Activated CD4-positive, alpha-beta T cell treated with anti-CD3 and anti-CD28 coated beads, Interleukin-2, amount 10 ng/mL, durations not matched to agents 24 days and 14 days (primary cell): ENCODE measurements at regions of chr11 and their contacts with region 1.

Region 1: DNA sequence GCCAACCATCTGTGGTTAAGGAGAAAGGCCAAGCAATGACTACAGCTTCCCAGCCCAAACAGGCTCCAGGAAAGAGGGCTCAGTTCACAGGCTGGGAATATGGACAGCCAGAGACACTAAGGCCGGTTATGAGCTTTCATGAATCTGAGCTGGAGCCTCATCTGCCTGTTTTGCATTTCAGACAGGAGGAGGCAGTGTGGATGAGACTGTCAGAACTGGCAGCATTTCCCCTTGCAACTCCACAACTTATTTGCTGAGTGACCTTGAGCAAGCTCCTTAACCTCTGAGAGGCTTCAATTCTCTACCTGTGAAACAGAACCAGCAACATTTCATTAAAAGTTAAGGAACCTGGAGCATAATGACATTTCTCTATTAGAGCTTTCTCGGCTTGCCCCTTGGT is 264.0 kb downstream of the ETS1 start:
- DNase-seq: peak; percentile 87
- H3K4me3 Mint-ChIP-seq: peak overlapping the region; percentile 69
- H3K27ac Mint-ChIP-seq: peak overlapping the region; percentile 97
- H3K4me1 Mint-ChIP-seq: peaks cover 79% of the 10 kb centered on the region
- H3K27me3 Mint-ChIP-seq: no peaks in the 10 kb centered on the region

Region 2: GRCh38 chr11:128232588-128232987 is 90.8 kb before region 1 on chr11:
- intact Hi-C with region 1: loop called (anchors 1 kb)
- DNase-seq: peak; percentile 68
- H3K4me3 Mint-ChIP-seq: peak overlapping the region; percentile 55
- H3K27ac Mint-ChIP-seq: peak overlapping the region; percentile 90
- H3K4me1 Mint-ChIP-seq: peaks cover 41% of the 10 kb centered on the region
- H3K27me3 Mint-ChIP-seq: no peaks in the 10 kb centered on the region

Region 3: DNA sequence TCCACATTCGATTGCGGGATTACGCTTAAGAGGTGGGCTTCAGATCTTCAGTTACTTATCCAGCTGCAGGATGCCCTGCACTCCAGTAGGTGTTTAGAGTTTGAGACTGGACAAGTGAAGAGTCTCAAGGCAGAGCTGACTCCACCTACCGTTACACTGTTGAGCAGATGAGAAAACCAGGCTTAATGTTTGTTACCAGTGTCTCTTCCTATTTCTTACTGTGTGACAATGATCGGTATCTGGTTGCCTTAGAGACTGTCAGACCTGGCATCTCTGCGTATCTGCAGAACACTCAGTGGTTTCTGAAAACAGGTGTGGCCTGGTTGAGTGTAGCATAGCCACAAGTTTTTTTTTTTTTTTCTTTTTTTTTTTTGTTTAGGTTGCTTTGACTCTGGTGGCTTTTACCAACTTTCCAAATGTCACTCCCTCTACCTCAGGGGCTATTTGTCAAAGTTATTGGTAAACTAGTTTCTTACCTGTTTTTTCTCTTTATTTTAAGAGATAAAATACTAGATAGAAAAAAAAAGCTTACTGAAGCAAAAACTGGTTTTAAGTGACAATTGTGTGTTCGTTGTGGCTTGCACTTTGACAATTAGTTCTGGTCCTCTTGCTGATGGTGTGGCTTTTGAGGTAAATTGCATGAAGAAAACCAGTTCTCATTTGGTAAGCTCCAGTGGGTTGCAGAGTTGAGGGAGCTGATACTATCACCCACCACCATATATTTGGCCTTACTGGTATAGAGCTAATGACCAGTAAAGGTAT is 20.8 kb before region 1 on chr11:
- intact Hi-C with region 1: loop called (anchors 1 kb)
- DNase-seq: peak; percentile 94
- H3K4me3 Mint-ChIP-seq: peak overlapping the region; percentile 81
- H3K27ac Mint-ChIP-seq: peak overlapping the region; percentile 93
- H3K4me1 Mint-ChIP-seq: peaks cover 70% of the 10 kb centered on the region
- H3K27me3 Mint-ChIP-seq: no peaks in the 10 kb centered on the region

Region 4: DNA sequence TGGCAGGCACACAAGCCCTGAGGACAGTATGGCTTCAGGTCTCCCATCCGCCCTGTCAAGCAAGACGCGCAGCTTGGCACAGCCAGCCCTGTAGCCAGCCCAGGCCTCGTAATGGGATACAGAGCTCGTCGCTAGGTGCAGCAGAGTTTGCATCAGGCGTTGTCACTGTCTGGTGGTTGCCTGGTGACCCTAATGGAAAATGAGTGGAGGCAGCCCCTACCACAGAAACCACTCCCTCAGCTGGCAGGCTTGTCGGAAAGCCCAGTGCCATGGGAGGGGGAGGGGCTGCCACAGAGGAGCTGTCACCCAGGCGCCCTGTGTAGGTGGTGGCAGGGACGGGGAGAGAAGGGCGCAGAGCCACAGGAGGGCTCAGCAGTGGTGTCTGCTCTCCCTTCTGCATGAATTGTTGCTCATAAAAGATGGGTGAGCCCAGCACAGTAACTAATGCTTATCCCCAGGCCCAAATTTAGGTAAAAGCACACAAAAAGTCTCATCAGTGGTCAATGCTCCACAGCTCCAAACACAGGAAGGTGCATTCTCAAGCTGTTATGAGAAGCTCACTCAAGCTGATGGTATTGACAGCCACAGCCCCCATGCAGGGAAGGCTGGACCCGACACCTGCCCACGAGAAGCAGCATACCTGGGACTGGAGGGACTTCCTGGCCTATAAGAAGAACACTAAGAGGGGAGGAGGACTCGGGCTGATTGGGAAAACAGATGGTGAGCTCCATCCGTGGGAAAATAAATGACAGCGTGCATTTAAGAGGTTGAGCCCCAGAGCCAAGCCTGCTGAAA is 99.4 kb after region 1 on chr11:
- intact Hi-C with region 1: loop called (anchors 1 kb)
- DNase-seq: peak; percentile 89
- H3K4me3 Mint-ChIP-seq: peak overlapping the region; percentile 65
- H3K27ac Mint-ChIP-seq: peak overlapping the region; percentile 96
- H3K4me1 Mint-ChIP-seq: peaks cover 24% of the 10 kb centered on the region
- H3K27me3 Mint-ChIP-seq: no peaks in the 10 kb centered on the region

Region 5: DNA sequence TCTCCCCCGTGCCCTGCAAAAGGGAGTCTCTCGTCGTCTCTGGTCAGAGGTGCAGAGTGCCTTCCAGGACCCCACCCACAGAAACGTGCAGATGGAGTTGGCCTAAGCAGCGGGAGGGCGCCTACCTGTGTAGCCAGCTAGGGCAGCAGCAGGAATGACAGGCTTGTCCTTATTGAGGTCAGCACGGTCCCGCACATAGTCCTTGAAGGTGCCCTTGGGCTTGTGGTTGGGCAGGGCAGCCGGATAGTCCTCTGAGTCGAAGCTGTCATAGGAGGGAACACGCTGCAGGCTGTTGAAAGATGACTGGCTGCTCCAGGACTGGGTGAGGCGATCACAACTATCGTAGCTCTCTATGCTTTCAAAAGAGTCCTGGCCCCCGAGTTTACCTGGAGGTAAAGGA is 156.7 kb after region 1 on chr11:
- intact Hi-C with region 1: no loop called
- DNase-seq: peak; percentile 79
- H3K4me3 Mint-ChIP-seq: peak overlapping the region; percentile 85
- H3K27ac Mint-ChIP-seq: peak overlapping the region; percentile 96
- H3K4me1 Mint-ChIP-seq: peaks cover 94% of the 10 kb centered on the region
- H3K27me3 Mint-ChIP-seq: no peaks in the 10 kb centered on the region

Region 6: GRCh38 chr11:128506999-128507611 is 183.7 kb after region 1 on chr11:
- intact Hi-C with region 1: loop called (anchors 2 kb)
- DNase-seq: peak; percentile 78
- H3K4me3 Mint-ChIP-seq: peak overlapping the region; percentile 93
- H3K27ac Mint-ChIP-seq: peak overlapping the region; percentile 98
- H3K4me1 Mint-ChIP-seq: peaks cover 93% of the 10 kb centered on the region
- H3K27me3 Mint-ChIP-seq: no peaks in the 10 kb centered on the region

Region 7: DNA sequence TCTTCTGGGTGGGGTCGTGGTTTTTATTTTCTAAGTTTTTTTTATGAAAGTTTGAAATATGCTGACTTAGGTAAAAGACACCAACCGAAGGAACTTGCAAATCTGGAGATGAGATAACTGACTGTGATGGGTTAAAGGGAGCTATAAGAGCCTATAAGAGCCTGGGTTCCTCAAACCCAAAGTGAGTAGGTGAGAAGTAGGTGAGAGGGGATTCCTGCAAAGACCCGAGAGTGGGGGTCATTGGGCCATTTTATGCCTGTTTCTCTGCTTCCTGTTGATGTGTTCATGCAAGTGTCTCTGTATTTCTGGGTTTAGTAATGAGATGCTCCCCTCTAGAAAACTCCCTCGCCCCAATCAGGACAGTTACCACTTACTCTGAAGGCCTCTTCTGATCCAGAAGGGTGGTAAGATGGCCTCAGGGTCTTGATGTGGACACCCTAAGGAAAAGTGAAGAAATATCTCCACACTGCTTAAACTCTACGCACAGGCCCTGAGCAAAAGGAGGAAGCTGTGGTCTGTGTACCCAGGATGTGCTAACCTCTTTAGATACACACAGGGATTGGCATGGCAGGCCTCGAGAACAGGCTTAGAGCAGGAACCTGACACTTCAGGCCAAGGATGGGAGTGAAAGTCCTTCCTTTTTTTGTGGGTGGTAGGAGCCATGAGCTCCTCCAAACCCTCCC is 372.3 kb after region 1 on chr11:
- intact Hi-C with region 1: loop called (anchors 10 kb)
- DNase-seq: peak; percentile 83
- H3K4me3 Mint-ChIP-seq: peak overlapping the region; percentile 93
- H3K27ac Mint-ChIP-seq: peak overlapping the region; percentile 92
- H3K4me1 Mint-ChIP-seq: peaks cover 64% of the 10 kb centered on the region
- H3K27me3 Mint-ChIP-seq: peaks cover 19% of the 10 kb centered on the region